Activated T-helper 2 cell treated with anti-CD3 and anti-CD28 coated beads, Interferon-gamma antibody, Interleukin-2, Interleukin-4, amounts not matched to agents 10 μg/mL and 5 μg/mL and 100 μg/mL, durations not matched to agents 14 hours and 24 hours and 36 hours (primary cell): ENCODE measurements at regions of chr2 and their contacts with region 1.

Region 1: DNA sequence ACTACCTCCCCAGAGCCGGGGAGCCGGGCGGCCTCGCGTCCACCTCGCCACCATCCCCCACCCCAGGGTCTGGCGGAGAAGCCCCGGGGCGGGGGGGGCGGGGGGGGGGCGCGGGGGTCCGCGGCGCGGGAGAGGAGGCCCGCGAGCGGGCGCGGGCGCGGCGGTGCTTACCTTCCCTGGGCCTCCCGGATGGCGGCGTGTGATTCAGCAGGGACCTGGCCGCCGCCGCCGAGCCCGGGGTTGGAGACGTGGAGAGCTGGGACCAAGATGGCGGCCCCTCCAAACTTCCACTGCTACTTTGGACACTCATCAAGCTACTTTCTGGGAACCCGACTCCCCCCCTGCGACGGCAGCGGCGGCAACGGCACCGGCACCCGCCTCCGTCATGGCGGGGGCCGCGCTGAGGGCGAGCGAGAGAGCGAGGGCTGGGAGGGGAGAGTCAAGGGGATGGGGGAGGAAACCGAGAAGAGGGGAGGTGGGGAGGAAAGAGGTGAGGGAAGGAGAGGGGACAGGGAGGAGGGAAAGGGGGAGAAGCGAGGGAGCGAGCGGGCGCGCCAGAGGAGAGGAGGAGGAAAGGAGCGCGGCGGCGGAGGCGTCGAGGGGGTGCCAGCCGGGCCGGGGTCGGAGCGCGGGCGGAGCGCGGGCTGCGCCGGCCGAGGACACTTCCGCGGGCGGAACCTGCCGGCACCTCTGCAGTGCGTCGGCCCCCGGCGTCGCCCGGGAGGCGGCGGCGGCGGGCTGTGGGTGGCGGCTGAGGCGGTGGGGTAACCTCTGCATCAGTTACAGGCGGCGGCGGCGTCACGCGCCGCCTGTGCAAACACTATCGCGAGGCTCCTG is at the start of gene TLK1:
- DNase-seq: peak; percentile 75
- H3K4me3 Mint-ChIP-seq: peak within 1 kb of the TSS; percentile 98
- H3K27ac Mint-ChIP-seq: peak within 1 kb of the TSS; percentile 95
- H3K4me1 Mint-ChIP-seq: peaks cover 60% of the 10 kb centered on the region
- H3K27me3 Mint-ChIP-seq: no peaks in the 10 kb centered on the region
- total RNA-seq, gene TLK1: 81.7 and 86.1 TPM in 2 replicates

Region 2: GRCh38 chr2:170928824-170929685 is 231.3 kb before region 1 on chr2 and contains the start of gene GORASP2:
- intact Hi-C with region 1: loop called (anchors 2 kb)
- DNase-seq: peak; percentile 98
- H3K4me3 Mint-ChIP-seq: peak within 1 kb of the TSS; percentile 92
- H3K27ac Mint-ChIP-seq: peak within 1 kb of the TSS; percentile 94
- H3K4me1 Mint-ChIP-seq: peaks cover 45% of the 10 kb centered on the region
- H3K27me3 Mint-ChIP-seq: no peaks in the 10 kb centered on the region
- total RNA-seq, gene GORASP2: 92.4 and 92.8 TPM in 2 replicates

Region 3: GRCh38 chr2:171042253-171042969 is 117.9 kb before region 1 on chr2:
- intact Hi-C with region 1: loop called (anchors 5 kb)
- DNase-seq: no peak
- H3K4me3 Mint-ChIP-seq: peak overlapping the region; percentile 10
- H3K27ac Mint-ChIP-seq: peak overlapping the region; percentile 79
- H3K4me1 Mint-ChIP-seq: peaks cover 27% of the 10 kb centered on the region
- H3K27me3 Mint-ChIP-seq: no peaks in the 10 kb centered on the region

Region 4: DNA sequence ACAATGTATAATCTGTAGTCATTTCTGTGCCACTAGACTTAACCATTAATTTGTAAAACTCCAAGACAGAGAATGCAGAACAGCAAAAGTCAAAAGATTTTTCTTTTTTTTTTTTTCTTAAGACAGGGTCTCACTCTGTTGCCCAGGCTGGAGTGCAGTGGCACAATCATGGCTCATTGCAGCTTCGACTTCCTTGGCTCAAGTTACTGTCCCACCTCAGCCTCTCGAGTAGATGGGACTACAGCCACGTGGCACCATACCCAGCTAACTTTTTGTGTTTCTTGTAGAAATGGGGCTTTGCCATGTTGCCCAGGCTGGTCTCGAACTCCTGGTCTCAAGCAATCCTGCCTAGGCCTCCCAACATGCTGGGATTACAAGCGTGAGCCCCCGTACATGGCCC is 79.7 kb before region 1 on chr2:
- intact Hi-C with region 1: no loop called
- DNase-seq: no peak
- H3K4me3 Mint-ChIP-seq: no peak overlapping the region
- H3K27ac Mint-ChIP-seq: no peak overlapping the region
- H3K4me1 Mint-ChIP-seq: peaks cover 46% of the 10 kb centered on the region
- H3K27me3 Mint-ChIP-seq: no peaks in the 10 kb centered on the region

Region 5: GRCh38 chr2:171095014-171095582 is 65.2 kb before region 1 on chr2:
- intact Hi-C with region 1: loop called (anchors 2 kb)
- DNase-seq: no peak
- H3K4me3 Mint-ChIP-seq: no peak overlapping the region
- H3K27ac Mint-ChIP-seq: peak overlapping the region; percentile 43
- H3K4me1 Mint-ChIP-seq: peaks cover 35% of the 10 kb centered on the region
- H3K27me3 Mint-ChIP-seq: no peaks in the 10 kb centered on the region

Region 6: GRCh38 chr2:171173089-171173488 is 12.8 kb after region 1 on chr2:
- intact Hi-C with region 1: loop called (anchors 1 kb)
- DNase-seq: no peak
- H3K4me3 Mint-ChIP-seq: no peak overlapping the region
- H3K27ac Mint-ChIP-seq: no peak overlapping the region
- H3K4me1 Mint-ChIP-seq: peaks cover 22% of the 10 kb centered on the region
- H3K27me3 Mint-ChIP-seq: peaks cover 3% of the 10 kb centered on the region

Region 7: GRCh38 chr2:171244970-171245782 is 84.8 kb after region 1 on chr2:
- intact Hi-C with region 1: loop called (anchors 5 kb)
- DNase-seq: no peak
- H3K4me3 Mint-ChIP-seq: no peak overlapping the region
- H3K27ac Mint-ChIP-seq: no peak overlapping the region
- H3K4me1 Mint-ChIP-seq: peaks cover 40% of the 10 kb centered on the region
- H3K27me3 Mint-ChIP-seq: peaks cover 3% of the 10 kb centered on the region

Region 8: GRCh38 chr2:171416009-171416926 is 255.9 kb after region 1 on chr2:
- intact Hi-C with region 1: loop called (anchors 1 kb)
- DNase-seq: peak; percentile 71
- H3K4me3 Mint-ChIP-seq: peak overlapping the region; percentile 9
- H3K27ac Mint-ChIP-seq: peak overlapping the region; percentile 91
- H3K4me1 Mint-ChIP-seq: peaks cover 34% of the 10 kb centered on the region
- H3K27me3 Mint-ChIP-seq: no peaks in the 10 kb centered on the region